ENCODE measurements at regions of chr17 and their contacts with region 1.

Region 1: GRCh38 chr17:29645515-29646051 is 22.9 kb upstream of the CORO6 start:
- DNase-seq: peak in 1 of 3 donors; percentile 36
- ATAC-seq: peak; percentile 53
- H3K4me3 ChIP-seq: no peak overlapping the region
- H3K4me1 ChIP-seq: no peaks in the 10 kb centered on the region
- CTCF ChIP-seq: no peak

Region 2: DNA sequence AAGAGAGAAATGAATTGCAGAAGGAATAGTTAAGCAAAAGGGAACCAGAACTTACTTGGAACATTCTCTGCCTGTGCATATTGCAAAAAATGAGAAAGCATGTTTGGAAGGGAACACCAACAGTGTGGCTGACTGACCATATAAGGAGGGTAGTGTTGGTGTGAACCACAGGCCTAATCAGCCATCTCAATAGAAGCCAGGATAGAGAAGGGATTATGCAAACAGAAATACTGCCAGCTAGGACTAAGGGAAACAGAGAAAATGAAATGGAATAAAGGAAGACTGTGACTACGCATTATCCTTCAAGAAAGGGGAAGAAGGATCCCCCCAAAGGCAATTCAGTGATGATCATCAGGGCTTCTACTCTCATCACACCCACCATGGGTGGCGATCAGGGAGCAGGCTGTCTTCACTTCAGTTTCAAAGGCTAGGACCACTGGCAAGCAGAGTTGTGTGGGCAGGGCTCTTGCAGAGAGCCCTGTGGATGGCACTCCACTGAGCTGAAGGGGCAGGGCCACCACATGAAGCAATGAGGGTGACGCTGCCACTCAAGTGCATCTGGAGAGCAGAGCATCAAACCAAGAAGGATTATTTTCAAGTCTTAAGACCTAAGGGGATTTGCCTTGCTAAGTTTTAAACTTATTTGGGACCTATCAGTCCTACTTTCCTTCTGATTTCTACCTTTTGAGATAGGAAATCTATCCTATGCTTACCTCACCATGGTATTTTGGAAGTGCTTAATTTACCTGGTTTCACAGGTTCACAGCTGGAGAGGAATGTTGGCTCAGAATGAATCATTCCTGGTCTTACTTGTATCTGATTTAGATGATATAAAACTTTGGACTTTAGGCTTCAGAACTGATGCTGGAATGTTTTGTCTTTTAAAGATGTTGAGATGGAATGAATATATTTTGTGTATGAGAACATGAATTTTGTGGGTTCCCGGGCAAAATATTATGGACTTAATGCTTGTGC is 143.9 kb after region 1 on chr17:
- intact Hi-C with region 1: loop called in 1 of 2 experiments (anchors 10 kb)
- DNase-seq: no peak
- ATAC-seq: no peak
- H3K4me3 ChIP-seq: no peak overlapping the region
- H3K4me1 ChIP-seq: no peaks in the 10 kb centered on the region
- CTCF ChIP-seq: no peak

Measured in mucosa of descending colon (tissue), 3 donors.